ENCODE measurements at regions of chr18 and their contacts with region 1.

Region 1: GRCh38 chr18:48675352-48675761 is 136.5 kb downstream of the CTIF start:
- DNase-seq: peak; percentile 87
- H3K4me3 Mint-ChIP-seq: no peak overlapping the region
- H3K27ac Mint-ChIP-seq: no peak overlapping the region
- H3K4me1 Mint-ChIP-seq: peaks cover 2% of the 10 kb centered on the region
- H3K27me3 Mint-ChIP-seq: no peaks in the 10 kb centered on the region

Region 2: GRCh38 chr18:48762836-48763718 is 87.7 kb after region 1 on chr18:
- CTCF ChIA-PET with region 1: no interaction called
- POLR2A ChIA-PET with region 1: no interaction called
- intact Hi-C with region 1: no loop called
- DNase-seq: no peak
- H3K4me3 Mint-ChIP-seq: no peak overlapping the region
- H3K27ac Mint-ChIP-seq: no peak overlapping the region
- H3K4me1 Mint-ChIP-seq: no peaks in the 10 kb centered on the region
- H3K27me3 Mint-ChIP-seq: no peaks in the 10 kb centered on the region

Region 3: GRCh38 chr18:48777026-48777743 is 101.8 kb after region 1 on chr18:
- CTCF ChIA-PET with region 1: no interaction called
- POLR2A ChIA-PET with region 1: interaction called, 3 read pairs
- intact Hi-C with region 1: loop called (anchors 10 kb)
- DNase-seq: peak; percentile 80
- H3K4me3 Mint-ChIP-seq: no peak overlapping the region
- H3K27ac Mint-ChIP-seq: no peak overlapping the region
- H3K4me1 Mint-ChIP-seq: peaks cover 7% of the 10 kb centered on the region
- H3K27me3 Mint-ChIP-seq: no peaks in the 10 kb centered on the region

Region 4: GRCh38 chr18:49041435-49042245 is 366.3 kb after region 1 on chr18:
- CTCF ChIA-PET with region 1: interaction called, 4 read pairs
- POLR2A ChIA-PET with region 1: no interaction called
- intact Hi-C with region 1: loop called (anchors 10 kb)
- DNase-seq: peak; percentile 34
- H3K4me3 Mint-ChIP-seq: no peak overlapping the region
- H3K27ac Mint-ChIP-seq: no peak overlapping the region
- H3K4me1 Mint-ChIP-seq: no peaks in the 10 kb centered on the region
- H3K27me3 Mint-ChIP-seq: no peaks in the 10 kb centered on the region

Region 5: GRCh38 chr18:49238433-49239042 is 563.2 kb after region 1 on chr18:
- CTCF ChIA-PET with region 1: interaction called, 7 read pairs
- POLR2A ChIA-PET with region 1: no interaction called
- intact Hi-C with region 1: loop called (anchors 5 kb)
- DNase-seq: no peak
- H3K4me3 Mint-ChIP-seq: no peak overlapping the region
- H3K27ac Mint-ChIP-seq: no peak overlapping the region
- H3K4me1 Mint-ChIP-seq: no peaks in the 10 kb centered on the region
- H3K27me3 Mint-ChIP-seq: no peaks in the 10 kb centered on the region

Region 6: DNA sequence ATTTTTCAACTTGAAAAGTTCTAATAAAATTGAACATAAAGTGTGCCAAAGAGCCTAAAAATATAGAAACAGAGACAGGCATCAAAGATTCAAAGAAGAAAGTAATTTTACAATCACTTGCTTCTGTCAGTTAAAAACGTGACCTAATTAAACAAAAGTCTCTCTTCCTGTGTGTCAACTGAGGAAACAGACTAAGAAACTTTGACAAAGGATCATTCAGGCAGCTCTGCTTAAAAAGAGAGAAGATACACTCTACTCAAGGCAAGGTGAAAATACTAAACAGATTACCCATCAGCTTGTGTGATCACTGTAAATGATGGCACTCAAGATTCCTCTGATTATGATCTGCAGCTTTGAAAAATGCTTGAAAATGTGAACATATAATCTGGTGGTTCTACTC is 737.3 kb after region 1 on chr18:
- CTCF ChIA-PET with region 1: interaction called, 3 read pairs
- POLR2A ChIA-PET with region 1: no interaction called
- intact Hi-C with region 1: loop called (anchors 1 kb)
- DNase-seq: no peak
- H3K4me3 Mint-ChIP-seq: no peak overlapping the region
- H3K27ac Mint-ChIP-seq: peak overlapping the region; percentile 77
- H3K4me1 Mint-ChIP-seq: peaks cover 29% of the 10 kb centered on the region
- H3K27me3 Mint-ChIP-seq: no peaks in the 10 kb centered on the region

Region 7: DNA sequence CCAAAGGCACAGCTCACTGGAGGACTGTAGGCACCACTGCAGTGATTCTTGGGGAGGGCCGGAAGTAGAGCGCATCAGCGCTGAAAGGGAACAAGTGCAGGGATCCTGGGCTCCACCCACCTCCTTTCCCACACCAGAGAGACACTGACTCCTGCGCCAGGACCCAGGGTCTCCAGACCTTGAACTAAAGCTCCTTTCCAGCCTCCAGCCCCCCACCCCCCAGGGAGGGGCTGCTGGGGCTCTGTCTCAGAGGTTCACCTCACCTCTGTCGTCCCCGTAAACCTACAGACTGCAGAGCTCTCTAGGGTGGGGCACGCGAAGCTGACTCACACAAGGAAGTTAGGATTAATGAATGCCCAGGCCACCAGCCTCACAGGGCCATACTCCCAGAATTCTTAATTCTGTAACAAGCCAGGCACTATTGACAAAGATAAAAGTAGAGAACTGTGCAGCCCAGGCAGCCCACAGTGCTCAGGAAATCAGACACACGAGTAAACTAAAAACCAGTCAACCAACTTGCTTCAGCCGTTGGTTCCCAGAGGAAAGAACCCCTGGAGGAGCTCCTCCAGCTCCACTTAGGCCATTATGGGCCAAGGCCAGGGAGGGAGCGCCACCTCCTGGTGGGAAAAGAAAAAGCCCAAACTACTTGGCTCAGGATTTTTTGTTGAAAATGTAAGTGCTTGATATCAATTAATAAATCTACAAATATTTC is 1183.1 kb after region 1 on chr18:
- CTCF ChIA-PET with region 1: no interaction called
- POLR2A ChIA-PET with region 1: no interaction called
- intact Hi-C with region 1: loop called (anchors 10 kb)
- DNase-seq: peak; percentile 73
- H3K4me3 Mint-ChIP-seq: no peak overlapping the region
- H3K27ac Mint-ChIP-seq: no peak overlapping the region
- H3K4me1 Mint-ChIP-seq: no peaks in the 10 kb centered on the region
- H3K27me3 Mint-ChIP-seq: no peaks in the 10 kb centered on the region